H1 (cell line): ENCODE measurements at regions of chr6 and their contacts with region 1.

Region 1: DNA sequence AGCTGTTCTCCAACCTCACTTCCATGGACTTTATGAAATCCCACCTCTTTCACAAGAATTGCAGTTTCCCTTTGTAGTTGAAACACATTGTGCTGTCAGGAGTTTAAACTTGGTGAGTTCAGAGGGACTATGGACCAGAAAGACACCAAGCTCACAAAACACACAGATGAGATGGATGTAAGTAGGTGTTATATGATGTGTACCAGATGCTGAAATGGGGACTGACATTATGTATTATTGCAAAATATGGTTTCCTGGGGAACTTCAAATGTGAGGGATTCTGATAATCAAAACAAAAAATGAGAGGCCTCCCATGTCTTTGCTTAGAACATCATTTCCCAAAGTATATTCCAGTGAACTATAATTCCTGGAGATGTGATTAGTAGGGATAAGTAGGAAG is 401.1 kb upstream of the ARID1B start:
- DNase-seq: no peak
- H3K4me3 ChIP-seq: no peak overlapping the region
- H3K27ac ChIP-seq: no peak overlapping the region
- H3K4me1 ChIP-seq: no peaks in the 10 kb centered on the region
- H3K27me3 ChIP-seq: no peaks in the 10 kb centered on the region
- CTCF ChIP-seq: no peak
- EP300 ChIP-seq: no peak
- POLR2A ChIP-seq: no peak
- RAD21 ChIP-seq: no peak

Region 2: DNA sequence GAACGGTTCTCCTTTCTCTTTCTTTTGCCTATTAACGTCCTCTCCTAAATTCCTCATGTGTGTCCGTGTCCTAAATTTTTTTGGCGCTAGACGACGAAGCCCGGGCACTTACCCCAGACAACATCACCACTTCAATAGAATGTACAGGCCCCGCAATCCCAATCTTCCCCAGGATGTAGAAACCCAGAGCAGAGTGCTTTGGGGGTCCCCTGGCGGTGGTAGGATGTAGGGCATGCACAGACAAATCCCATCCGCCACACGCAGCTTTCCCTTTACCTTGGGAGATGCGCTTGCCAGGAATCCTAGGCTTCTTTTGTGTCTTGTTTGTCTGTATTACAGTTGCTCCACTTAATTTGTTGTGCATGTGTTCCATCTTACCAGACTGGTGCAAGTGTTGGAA is 16.2 kb before region 1 on chr6:
- CTCF ChIA-PET with region 1: interaction called, 18 read pairs
- POLR2A ChIA-PET with region 1: no interaction called
- DNase-seq: peak; percentile 25 to 84
- H3K4me3 ChIP-seq: no peak overlapping the region
- H3K27ac ChIP-seq: no peak overlapping the region
- H3K4me1 ChIP-seq: no peaks in the 10 kb centered on the region
- H3K27me3 ChIP-seq: no peaks in the 10 kb centered on the region
- CTCF ChIP-seq: peak; percentile 60 to 65 (median 62)
- EP300 ChIP-seq: no peak
- POLR2A ChIP-seq: no peak
- RAD21 ChIP-seq: peak; percentile 75 to 82